Right ventricle myocardium superior (tissue), 1 donor: ENCODE measurements at regions of chr17 and their contacts with region 1.

Region 1: DNA sequence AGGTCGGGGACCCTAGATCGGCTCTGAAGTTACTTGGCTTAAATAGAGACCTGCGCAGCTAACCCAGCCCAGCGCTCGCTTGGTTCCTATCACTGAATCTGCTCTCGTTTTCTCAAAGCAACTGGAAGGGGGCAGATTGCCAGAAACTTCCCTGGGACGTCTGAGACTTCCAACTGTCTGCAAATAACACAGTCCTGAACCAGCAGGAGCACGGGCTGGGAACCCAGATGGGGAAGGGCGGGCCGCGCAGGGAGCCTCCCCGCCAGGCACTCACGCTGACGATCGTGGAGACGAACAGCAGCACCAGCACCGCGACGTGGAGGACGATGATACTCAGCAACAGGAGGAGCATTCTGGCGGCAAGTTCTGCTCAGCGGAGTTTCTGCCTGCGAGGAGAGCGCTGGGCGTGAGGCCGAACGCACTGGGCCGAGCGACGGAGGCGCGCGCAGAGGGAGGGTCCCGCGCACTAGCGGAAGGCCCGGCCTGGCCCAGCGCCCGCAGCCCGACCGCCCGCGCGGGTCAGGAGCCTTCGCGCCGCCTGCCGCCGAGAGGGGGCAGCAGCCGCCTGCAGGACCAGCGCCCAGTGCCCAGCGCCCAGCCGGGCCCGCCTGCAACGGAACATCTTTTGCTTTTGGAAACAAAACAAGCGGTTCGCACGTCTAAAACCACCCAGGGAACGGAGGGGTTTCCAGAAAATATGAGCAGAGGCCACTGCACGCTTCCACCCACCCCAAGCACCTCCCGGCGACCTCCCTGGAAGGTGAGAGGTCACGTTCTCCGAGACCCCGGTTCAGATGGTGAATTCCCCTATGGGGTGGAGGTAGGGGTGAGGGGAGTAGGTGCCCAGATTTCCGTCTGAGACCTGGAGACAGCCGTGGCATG is 4.5 kb downstream of the PMP22 start:
- DNase-seq: peak; percentile 92
- ATAC-seq: peak; percentile 68

Region 2: DNA sequence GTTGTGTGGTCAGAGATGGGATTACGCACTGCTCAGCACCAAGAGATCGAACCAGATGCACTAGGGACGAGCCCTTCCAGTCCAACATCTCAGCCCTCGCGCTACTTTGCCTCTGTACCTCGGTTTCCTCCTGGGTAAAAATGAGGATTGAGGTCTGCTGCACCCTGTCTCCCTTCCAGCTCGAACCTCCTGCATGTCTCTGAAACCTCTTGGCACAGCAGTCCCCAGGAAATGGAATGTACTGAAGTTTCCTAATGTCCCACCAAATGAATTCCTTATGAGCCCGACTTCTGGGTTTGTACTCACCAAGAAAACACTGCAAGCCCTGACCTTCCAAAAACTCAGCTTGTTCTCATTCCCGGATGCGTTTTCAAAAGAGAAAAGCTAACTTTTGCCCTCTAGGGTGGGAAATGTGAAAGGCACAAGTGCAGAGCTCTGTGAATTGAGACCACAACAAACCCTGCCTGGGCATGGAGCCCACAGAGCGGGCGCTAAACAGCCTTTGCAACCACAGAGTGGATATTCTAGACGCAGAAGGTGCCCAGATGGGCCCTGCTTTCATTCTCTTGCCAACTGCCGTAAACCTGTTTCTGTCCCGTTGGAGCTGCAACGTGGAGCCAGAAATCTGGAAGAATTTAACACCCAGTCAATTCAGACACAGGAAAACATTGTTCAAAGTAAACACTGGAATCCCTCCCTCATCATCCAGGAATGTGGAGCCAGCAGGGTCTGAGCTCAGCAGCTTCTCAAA is 196.5 kb after region 1 on chr17:
- intact Hi-C with region 1: loop called (anchors 5 kb)
- DNase-seq: peak; percentile 78
- ATAC-seq: peak; percentile 73

Region 3: DNA sequence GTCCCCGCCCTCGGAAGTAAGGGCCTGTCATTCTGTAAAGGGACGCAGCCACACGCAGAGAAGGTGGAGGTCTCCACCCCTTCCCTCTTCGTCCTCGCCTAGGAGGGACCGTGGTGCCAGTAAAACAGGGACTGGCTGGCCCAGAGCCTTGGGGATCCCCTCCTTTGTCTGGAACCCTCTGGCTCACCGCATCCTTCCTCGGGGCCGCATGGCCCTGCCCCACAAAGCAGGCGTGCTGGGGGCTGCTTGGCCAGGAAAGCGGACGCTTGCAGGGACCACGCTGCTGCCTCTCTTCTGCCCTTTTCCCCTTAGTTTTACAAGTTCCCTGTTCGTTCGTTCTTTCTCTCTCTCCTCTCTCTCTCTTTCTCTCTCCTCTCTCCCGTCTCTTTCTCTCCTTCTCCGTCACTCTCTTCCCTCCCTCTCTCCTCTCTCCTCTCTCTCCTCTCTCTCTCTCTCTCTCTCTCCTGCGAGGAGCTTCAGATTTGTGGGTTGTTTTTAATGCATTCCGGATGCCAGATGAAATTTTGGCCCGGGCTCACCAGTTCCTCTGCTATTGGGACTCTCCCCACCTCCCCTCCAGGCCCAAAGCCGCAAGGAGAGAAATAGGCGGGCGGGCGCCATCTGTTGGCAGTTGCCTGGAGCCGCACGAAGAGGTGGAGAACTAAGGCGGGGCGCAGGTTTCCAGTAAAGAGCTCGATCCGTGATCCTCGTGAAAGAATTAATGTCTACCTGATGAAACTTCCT is 241.9 kb after region 1 on chr17:
- intact Hi-C with region 1: loop called (anchors 2 kb)
- DNase-seq: peak; percentile 94
- ATAC-seq: peak; percentile 96